GM12878 (cell line): ENCODE measurements at regions of chr4 and their contacts with region 1.

Region 1: DNA sequence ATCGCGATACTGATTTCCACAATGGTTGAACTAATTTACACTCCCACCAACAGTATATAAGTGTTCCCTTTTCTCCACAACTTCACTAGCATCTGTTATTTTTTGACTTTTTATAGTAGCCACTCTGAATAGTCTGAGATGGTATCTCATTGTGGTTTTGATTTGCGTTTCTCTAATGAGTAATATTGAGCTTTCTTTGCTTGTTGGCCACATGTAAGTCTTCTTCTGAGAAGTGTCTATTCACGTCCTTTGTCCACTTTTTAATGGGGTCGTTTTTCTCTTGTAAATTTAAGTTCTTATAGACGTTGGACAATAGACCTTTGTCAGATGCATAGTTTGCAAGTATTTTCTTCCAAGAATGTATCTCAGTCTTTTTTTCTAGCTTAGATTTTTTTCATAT is 10.0 kb downstream of the FBXW7 start:
- DNase-seq: no peak
- ATAC-seq: peak; percentile 55
- H3K4me3 ChIP-seq: peak overlapping the region; percentile 46; the same call in 1 of the 2 replicates
- H3K27ac ChIP-seq: peak overlapping the region; percentile 55
- H3K4me1 ChIP-seq: peaks cover 53% of the 10 kb centered on the region
- H3K27me3 ChIP-seq: no peaks in the 10 kb centered on the region
- CTCF ChIP-seq: no peak
- EP300 ChIP-seq: no peak
- POLR2A ChIP-seq: no peak
- RAD21 ChIP-seq: no peak

Region 2: GRCh38 chr4:151898061-151898460 is 627.8 kb before region 1 on chr4:
- CTCF ChIA-PET with region 1: no interaction called
- POLR2A ChIA-PET with region 1: no interaction called
- RAD21 ChIA-PET with region 1: no interaction called
- SMC1A ChIA-PET with region 1: no interaction called
- in situ Hi-C with region 1: no loop called
- intact Hi-C with region 1: no loop called
- DNase-seq: no peak
- ATAC-seq: no peak
- H3K4me3 ChIP-seq: no peak overlapping the region
- H3K27ac ChIP-seq: no peak overlapping the region
- H3K4me1 ChIP-seq: no peaks in the 10 kb centered on the region
- H3K27me3 ChIP-seq: no peaks in the 10 kb centered on the region
- CTCF ChIP-seq: no peak
- EP300 ChIP-seq: no peak
- POLR2A ChIP-seq: no peak
- RAD21 ChIP-seq: no peak

Region 3: DNA sequence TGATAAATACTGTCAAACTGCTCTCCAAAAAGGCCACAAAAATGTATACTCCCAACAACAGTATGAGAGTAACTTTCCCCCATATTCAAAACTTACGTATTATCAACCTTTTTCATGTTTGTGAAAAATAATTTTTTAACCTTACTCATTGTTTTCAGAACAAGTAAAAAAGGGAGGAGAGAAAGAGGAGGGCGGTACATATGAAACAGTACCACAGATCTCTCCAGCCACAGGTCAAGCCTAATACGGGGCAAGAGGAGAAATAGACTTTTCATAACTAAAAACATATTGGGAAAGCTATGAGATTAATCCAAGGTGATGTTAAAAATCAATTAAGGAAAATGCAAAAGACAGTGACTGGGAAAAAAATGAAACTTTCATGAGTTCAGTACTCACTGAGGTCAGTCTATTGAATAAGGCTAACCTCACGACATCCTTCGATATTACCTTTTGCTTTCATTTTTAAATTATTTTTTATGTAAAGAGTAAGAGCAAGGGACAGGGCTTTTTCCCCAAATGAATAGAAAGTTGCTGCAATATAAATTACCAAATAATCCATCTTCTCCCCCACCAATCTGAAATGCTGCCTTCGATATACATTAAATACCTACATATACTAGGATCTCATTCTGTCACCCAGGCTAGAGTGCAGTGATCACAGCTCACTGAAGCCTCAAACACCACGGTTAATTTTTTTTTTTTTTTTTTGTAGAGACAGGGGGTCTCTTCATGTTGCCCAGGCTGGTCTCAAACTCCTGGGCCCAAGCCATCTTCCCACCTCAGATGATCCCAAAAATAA is 15.3 kb before region 1 on chr4:
- CTCF ChIA-PET with region 1: interaction called, 12 read pairs
- POLR2A ChIA-PET with region 1: interaction called, 93 read pairs
- RAD21 ChIA-PET with region 1: interaction called, 224 read pairs
- SMC1A ChIA-PET with region 1: interaction called, 197 read pairs
- in situ Hi-C with region 1: no loop called
- intact Hi-C with region 1: no loop called
- DNase-seq: no peak
- ATAC-seq: peak; percentile 71
- H3K4me3 ChIP-seq: peak overlapping the region; percentile 61; the same call in 1 of the 2 replicates
- H3K27ac ChIP-seq: peak overlapping the region; percentile 74
- H3K4me1 ChIP-seq: peaks cover 24% of the 10 kb centered on the region
- H3K27me3 ChIP-seq: no peaks in the 10 kb centered on the region
- CTCF ChIP-seq: no peak
- EP300 ChIP-seq: no peak
- POLR2A ChIP-seq: no peak
- RAD21 ChIP-seq: no peak

Region 4: DNA sequence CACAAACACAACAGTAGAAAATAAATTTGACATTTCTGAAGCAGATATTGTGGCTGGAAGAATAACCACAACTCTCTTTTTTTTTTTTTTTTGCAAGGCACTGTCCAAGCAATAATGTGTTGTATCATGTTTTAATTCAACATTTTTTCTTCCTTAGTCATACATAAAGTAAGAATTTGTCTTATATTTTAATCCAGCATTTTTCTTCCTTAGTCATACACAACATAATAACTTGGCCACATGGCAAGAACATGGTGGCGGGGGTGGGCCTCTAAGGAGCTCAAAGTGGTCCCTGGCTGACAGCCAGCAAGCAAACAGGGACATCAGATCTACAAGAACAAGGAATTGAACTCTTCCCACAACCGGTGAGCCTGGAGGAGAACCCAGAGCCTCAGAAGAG is 10.2 kb before region 1 on chr4:
- CTCF ChIA-PET with region 1: interaction called, 12 read pairs
- POLR2A ChIA-PET with region 1: interaction called, 10 read pairs
- RAD21 ChIA-PET with region 1: interaction called, 9 read pairs
- SMC1A ChIA-PET with region 1: interaction called, 45 read pairs
- in situ Hi-C with region 1: no loop called
- intact Hi-C with region 1: no loop called
- DNase-seq: no peak
- ATAC-seq: no peak
- H3K4me3 ChIP-seq: no peak overlapping the region
- H3K27ac ChIP-seq: no peak overlapping the region
- H3K4me1 ChIP-seq: peaks cover 15% of the 10 kb centered on the region; the same call in 1 of the 2 replicates
- H3K27me3 ChIP-seq: no peaks in the 10 kb centered on the region
- CTCF ChIP-seq: no peak
- EP300 ChIP-seq: no peak
- POLR2A ChIP-seq: no peak
- RAD21 ChIP-seq: no peak